K562 (cell line): ENCODE measurements at regions of chr15 and their contacts with region 1.

Region 1: GRCh38 chr15:27500206-27500605 is 529.2 kb downstream of the GABRG3 start:
- DNase-seq: no peak
- ATAC-seq: no peak
- H3K4me3 ChIP-seq: no peak overlapping the region
- H3K27ac ChIP-seq: no peak overlapping the region
- H3K4me1 ChIP-seq: peaks cover 0 to 6% of the 10 kb centered on the region in 2 experiments; a peak in 3 of 5 replicates
- H3K27me3 ChIP-seq: no peaks in the 10 kb centered on the region
- CTCF ChIP-seq: no peak
- EP300 ChIP-seq: no peak
- POLR2A ChIP-seq: no peak
- RAD21 ChIP-seq: no peak

Region 2: GRCh38 chr15:27365441-27365840 is 134.8 kb before region 1 on chr15:
- CTCF ChIA-PET with region 1: no interaction called
- POLR2A ChIA-PET with region 1: no interaction called
- in situ Hi-C with region 1: no loop called
- intact Hi-C with region 1: no loop called
- DNase-seq: no peak
- ATAC-seq: no peak
- H3K4me3 ChIP-seq: no peak overlapping the region
- H3K27ac ChIP-seq: no peak overlapping the region
- H3K4me1 ChIP-seq: no peaks in the 10 kb centered on the region
- H3K27me3 ChIP-seq: no peaks in the 10 kb centered on the region
- CTCF ChIP-seq: no peak
- EP300 ChIP-seq: no peak
- POLR2A ChIP-seq: no peak
- RAD21 ChIP-seq: no peak

Region 3: GRCh38 chr15:27382361-27383025 is 117.7 kb before region 1 on chr15:
- CTCF ChIA-PET with region 1: no interaction called
- POLR2A ChIA-PET with region 1: no interaction called
- in situ Hi-C with region 1: no loop called
- intact Hi-C with region 1: loop called (anchors 10 kb)
- DNase-seq: no peak
- ATAC-seq: no peak
- H3K4me3 ChIP-seq: no peak overlapping the region
- H3K27ac ChIP-seq: no peak overlapping the region
- H3K4me1 ChIP-seq: no peaks in the 10 kb centered on the region
- H3K27me3 ChIP-seq: no peaks in the 10 kb centered on the region; a peak in 1 of 5 replicates
- CTCF ChIP-seq: no peak
- EP300 ChIP-seq: no peak
- POLR2A ChIP-seq: no peak
- RAD21 ChIP-seq: no peak